ENCODE measurements at regions of chr1 and their contacts with region 1.

Region 1: DNA sequence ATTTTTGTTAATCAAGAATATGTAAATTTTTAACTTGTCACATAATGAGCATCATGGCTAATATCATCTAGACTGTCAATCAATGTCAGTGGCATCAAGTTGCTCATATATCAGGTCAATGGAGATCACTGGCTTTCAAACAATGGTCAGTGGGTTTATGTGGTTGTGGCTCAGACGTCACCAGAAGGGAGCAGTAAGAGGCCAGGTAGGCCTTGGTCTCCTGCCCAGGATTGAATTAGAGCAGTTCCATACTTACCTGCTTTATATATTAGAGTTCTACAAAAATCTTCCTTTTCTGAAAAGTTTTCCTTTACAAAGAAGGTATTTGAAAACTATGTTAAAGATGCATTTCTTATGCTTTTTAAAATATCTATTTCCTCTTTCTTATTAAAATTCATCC is 206.3 kb upstream of the B3GALT2 start:
- DNase-seq: peak; percentile 14
- H3K4me3 ChIP-seq: no peak overlapping the region
- H3K27ac ChIP-seq: no peak overlapping the region
- H3K4me1 ChIP-seq: no peaks in the 10 kb centered on the region
- CTCF ChIP-seq: peak; percentile 52

Region 2: DNA sequence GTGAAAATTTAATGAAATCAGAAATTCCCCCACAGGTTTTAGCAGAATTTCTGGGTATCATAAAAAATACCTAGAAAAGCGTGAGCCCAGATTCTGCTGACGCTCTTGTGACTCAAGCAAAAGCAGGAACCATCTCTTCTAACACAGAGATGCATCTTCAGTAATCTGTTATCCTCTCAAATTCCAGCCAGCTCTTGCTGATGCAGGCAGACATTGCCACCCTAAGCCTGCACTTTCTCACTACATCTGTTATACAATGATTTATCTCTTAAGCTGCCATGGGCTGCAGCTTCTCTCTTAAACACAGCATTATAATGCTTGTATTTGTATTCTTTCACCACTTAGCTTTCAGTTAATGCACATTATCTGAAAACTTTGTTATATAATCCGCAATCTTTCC is 930.1 kb before region 1 on chr1:
- CTCF ChIA-PET with region 1: no interaction called
- POLR2A ChIA-PET with region 1: no interaction called
- intact Hi-C with region 1: loop called (anchors 10 kb)
- DNase-seq: no peak
- H3K4me3 ChIP-seq: no peak overlapping the region
- H3K27ac ChIP-seq: no peak overlapping the region
- H3K4me1 ChIP-seq: no peaks in the 10 kb centered on the region
- CTCF ChIP-seq: no peak

Region 3: DNA sequence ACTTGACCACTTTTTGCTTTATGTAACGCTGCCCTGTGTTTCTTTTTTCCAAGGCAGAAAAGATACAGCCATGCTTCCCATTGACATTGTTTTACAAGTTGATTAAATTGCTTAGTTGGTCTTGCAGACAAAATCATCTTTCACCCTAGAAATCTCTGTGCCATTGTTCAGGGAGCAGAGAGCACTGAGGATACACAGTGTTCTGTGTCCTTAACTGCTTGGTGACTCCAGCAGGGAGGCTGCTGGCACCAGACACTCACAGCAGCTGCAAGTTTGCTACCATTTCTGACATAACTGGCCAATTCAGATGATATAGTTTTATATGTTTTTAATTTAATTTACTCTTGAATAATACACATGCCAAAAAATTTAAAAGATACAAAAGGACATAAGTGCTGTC is 465.2 kb before region 1 on chr1:
- CTCF ChIA-PET with region 1: no interaction called
- POLR2A ChIA-PET with region 1: no interaction called
- intact Hi-C with region 1: no loop called
- DNase-seq: no peak
- H3K4me3 ChIP-seq: no peak overlapping the region
- H3K27ac ChIP-seq: no peak overlapping the region
- H3K4me1 ChIP-seq: no peaks in the 10 kb centered on the region
- CTCF ChIP-seq: no peak

Region 4: DNA sequence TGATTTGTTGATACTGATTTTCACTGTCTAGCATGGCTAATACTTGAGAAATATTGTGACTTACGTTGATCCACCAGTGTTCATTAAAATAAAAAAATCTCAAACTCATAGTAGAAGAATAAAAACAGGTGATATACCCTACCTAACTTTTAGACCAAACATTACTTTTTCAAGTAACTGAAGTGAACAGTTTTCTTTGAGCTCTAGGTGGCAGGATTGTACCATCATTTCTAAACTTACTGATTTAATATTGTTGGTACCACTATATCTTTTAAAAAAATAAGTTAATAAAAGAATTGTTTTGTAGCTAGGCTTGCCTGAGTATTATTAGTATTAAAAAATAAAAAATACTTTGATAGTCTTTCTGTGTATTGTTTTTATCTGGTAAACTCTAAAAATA is 249.4 kb before region 1 on chr1:
- CTCF ChIA-PET with region 1: no interaction called
- POLR2A ChIA-PET with region 1: no interaction called
- intact Hi-C with region 1: loop called (anchors 10 kb)
- DNase-seq: peak; percentile 24
- H3K4me3 ChIP-seq: no peak overlapping the region
- H3K27ac ChIP-seq: no peak overlapping the region
- H3K4me1 ChIP-seq: no peaks in the 10 kb centered on the region
- CTCF ChIP-seq: peak; percentile 74

Measured in OCI-LY7 (cell line).